ENCODE measurements at regions of chr16 and their contacts with region 1.

Region 1: DNA sequence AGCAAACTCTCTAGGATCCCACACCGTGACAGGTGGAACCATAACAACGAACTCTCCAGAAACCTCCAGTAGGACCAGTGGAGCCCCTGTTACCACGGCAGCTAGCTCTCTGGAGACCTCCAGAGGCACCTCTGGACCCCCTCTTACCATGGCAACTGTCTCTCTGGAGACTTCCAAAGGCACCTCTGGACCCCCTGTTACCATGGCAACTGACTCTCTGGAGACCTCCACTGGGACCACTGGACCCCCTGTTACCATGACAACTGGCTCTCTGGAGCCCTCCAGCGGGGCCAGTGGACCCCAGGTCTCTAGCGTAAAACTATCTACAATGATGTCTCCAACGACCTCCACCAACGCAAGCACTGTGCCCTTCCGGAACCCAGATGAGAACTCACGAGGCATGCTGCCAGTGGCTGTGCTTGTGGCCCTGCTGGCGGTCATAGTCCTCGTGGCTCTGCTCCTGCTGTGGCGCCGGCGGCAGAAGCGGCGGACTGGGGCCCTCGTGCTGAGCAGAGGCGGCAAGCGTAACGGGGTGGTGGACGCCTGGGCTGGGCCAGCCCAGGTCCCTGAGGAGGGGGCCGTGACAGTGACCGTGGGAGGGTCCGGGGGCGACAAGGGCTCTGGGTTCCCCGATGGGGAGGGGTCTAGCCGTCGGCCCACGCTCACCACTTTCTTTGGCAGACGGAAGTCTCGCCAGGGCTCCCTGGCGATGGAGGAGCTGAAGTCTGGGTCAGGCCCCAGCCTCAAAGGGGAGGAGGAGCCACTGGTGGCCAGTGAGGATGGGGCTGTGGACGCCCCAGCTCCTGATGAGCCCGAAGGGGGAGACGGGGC is 1.3 kb downstream of the SPN start:
- DNase-seq: no peak
- ATAC-seq: peak; percentile 20
- H3K4me3 ChIP-seq: peak overlapping the region; percentile 99
- H3K27ac ChIP-seq: peak overlapping the region; percentile 81
- H3K4me1 ChIP-seq: peaks cover 12% of the 10 kb centered on the region
- H3K27me3 ChIP-seq: no peaks in the 10 kb centered on the region
- CTCF ChIP-seq: peak; percentile 17 to 23 (median 17); a peak in 2 of 6 replicates
- EP300 ChIP-seq: no peak
- POLR2A ChIP-seq: peak; percentile 71
- RAD21 ChIP-seq: no peak

Region 2: DNA sequence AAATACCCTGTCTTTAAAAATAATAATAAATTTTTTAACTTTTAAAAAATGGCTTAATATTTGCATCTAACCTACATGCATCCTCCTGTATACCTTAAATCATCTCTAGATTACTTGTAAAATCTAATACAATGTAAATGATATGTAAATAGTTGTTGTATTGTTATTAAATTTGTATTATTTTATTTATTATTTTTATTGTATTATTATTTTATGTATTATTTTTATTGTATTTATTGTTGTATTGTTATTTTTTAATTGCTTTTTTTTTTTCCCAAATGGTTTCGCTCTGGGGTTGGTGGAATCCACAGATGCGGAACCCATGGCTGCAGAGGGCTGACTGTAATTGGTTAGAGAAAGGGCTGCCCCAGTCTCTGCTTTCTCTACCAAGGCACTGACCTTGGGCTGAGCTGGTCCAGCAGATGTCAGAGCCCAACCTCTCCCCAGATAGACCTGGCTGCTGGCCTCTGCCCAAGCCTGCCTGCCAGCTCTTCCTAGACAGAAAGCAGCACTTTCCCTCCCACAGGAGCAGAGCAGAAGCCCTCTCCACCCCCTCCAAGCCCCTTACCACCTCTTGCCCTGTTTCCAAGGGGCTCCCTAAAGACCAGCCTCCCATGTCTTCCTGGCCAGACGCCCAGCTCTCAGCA is 1784.6 kb before region 1 on chr16:
- CTCF ChIA-PET with region 1: no interaction called
- POLR2A ChIA-PET with region 1: no interaction called
- RAD21 ChIA-PET with region 1: no interaction called
- SMC1A ChIA-PET with region 1: no interaction called
- in situ Hi-C with region 1: no loop called
- intact Hi-C with region 1: no loop called
- DNase-seq: no peak
- ATAC-seq: no peak
- H3K4me3 ChIP-seq: no peak overlapping the region
- H3K27ac ChIP-seq: no peak overlapping the region
- H3K4me1 ChIP-seq: no peaks in the 10 kb centered on the region
- H3K27me3 ChIP-seq: no peaks in the 10 kb centered on the region
- CTCF ChIP-seq: no peak
- EP300 ChIP-seq: no peak
- POLR2A ChIP-seq: no peak
- RAD21 ChIP-seq: no peak

Region 3: DNA sequence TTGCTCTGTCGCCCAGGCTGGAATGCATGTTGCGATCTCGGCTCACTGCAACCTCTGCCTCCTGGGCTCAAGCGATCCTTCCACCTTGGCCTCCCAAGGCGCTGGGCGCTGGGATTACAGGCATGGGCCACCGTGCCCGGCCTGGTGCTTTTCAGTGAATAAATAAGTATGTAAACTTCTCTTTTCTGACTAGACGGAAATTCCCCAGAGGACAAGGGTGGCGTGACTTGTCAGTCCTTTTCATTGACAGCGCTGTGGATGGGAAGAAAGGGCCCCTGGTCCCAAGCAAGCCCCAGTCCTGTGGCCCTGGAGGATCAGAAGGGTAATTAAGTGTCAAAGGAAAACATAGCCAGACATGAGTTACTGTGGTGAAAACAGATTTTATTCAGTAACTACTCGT is 10.8 kb before region 1 on chr16:
- CTCF ChIA-PET with region 1: interaction called, 25 read pairs
- POLR2A ChIA-PET with region 1: interaction called, 62 read pairs
- RAD21 ChIA-PET with region 1: interaction called, 50 read pairs
- SMC1A ChIA-PET with region 1: interaction called, 52 read pairs
- in situ Hi-C with region 1: no loop called
- intact Hi-C with region 1: no loop called
- DNase-seq: no peak
- ATAC-seq: peak; percentile 93
- H3K4me3 ChIP-seq: no peak overlapping the region
- H3K27ac ChIP-seq: peak overlapping the region; percentile 61
- H3K4me1 ChIP-seq: peaks cover 18% of the 10 kb centered on the region
- H3K27me3 ChIP-seq: no peaks in the 10 kb centered on the region
- CTCF ChIP-seq: no peak
- EP300 ChIP-seq: peak in 1 of 2 experiments; percentile 37; a peak in 2 of 4 replicates
- POLR2A ChIP-seq: no peak
- RAD21 ChIP-seq: no peak

Region 4: DNA sequence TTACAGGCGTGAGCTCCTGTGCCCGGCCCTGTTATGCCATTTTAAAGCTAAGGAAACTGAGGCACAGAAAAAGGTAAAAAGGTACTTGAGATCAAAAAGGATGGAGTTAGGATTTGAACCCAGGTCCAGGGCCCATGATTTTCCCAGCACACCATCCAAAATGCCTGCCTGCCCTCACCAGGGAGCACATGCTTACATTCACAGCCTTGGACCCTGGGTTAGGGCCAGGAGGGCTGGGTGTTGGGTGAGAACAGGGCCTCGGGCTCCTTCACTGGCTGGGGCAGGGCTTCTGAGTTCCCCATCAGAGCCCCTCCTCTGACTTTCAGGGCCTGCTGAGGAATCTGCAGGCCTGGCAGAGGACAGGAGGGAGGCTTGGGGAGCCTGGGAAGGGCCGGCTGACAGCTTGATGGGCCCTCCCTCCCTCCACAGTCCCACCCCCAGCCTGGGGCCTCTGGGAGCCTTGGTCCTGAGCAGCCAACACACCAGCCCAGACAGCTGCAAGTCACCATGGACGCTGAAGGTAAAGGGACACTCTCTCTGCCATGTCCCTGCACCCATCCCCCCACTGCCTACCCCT is 14.5 kb after region 1 on chr16 and contains the start of gene QPRT:
- CTCF ChIA-PET with region 1: interaction called, 17 read pairs
- POLR2A ChIA-PET with region 1: interaction called, 28 read pairs
- RAD21 ChIA-PET with region 1: interaction called, 66 read pairs
- SMC1A ChIA-PET with region 1: interaction called, 69 read pairs
- in situ Hi-C with region 1: no loop called
- intact Hi-C with region 1: no loop called
- DNase-seq: no peak
- ATAC-seq: peak; percentile 82
- H3K4me3 ChIP-seq: peak within 1 kb of the TSS; percentile 84
- H3K27ac ChIP-seq: peak within 1 kb of the TSS; percentile 85
- H3K4me1 ChIP-seq: peaks cover 8% of the 10 kb centered on the region; the same call in 1 of the 2 replicates
- H3K27me3 ChIP-seq: no peaks in the 10 kb centered on the region
- CTCF ChIP-seq: no peak
- EP300 ChIP-seq: no peak
- POLR2A ChIP-seq: peak; percentile 67
- RAD21 ChIP-seq: no peak
- polyA plus RNA-seq, gene QPRT: 2.7 to 6.9 TPM

Region 5: DNA sequence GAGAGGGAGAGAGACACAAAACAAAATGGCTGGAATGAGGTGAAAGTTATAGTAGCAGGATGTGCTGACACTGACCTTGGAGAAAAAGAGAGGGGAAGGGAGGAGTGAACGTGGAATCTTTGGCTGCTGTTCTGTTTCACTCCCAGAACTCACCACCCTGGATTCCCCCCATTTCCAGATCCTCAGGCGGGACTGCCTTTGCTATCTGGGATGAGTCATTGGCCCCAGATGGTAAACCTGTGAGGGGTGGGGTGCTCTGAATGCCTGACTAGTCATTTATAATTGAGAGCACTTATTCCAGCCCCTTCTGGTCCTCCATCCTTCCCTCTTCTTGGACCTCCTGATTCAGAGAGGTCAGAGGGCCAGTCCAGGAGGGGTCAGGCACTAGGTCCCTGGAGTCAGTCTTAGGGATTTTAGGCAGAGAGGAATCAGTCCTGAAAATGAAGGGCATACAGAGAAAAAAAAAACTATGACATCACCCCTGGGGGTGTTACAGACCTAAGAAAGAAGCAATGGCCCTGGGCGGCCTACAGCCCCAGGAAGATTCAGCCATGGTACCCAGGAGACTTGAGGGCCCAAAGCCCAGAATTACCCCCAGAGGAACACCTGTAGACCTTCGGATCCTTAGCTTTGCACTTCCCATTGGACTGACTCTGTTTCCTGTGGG is 111.6 kb after region 1 on chr16:
- CTCF ChIA-PET with region 1: no interaction called
- POLR2A ChIA-PET with region 1: no interaction called
- RAD21 ChIA-PET with region 1: no interaction called
- SMC1A ChIA-PET with region 1: no interaction called
- in situ Hi-C with region 1: no loop called
- intact Hi-C with region 1: no loop called
- DNase-seq: no peak
- ATAC-seq: no peak
- H3K4me3 ChIP-seq: no peak overlapping the region
- H3K27ac ChIP-seq: no peak overlapping the region
- H3K4me1 ChIP-seq: no peaks in the 10 kb centered on the region
- H3K27me3 ChIP-seq: no peaks in the 10 kb centered on the region
- CTCF ChIP-seq: no peak
- EP300 ChIP-seq: no peak
- POLR2A ChIP-seq: no peak
- RAD21 ChIP-seq: no peak

Measured in GM12878 (cell line).